IMR-90 (cell line): ENCODE measurements at regions of chr3 and their contacts with region 1.

Region 1: GRCh38 chr3:189340672-189341460 is 169.1 kb downstream of the TPRG1 start:
- DNase-seq: no peak
- ATAC-seq: no peak
- H3K4me3 ChIP-seq: no peak overlapping the region
- H3K27ac ChIP-seq: no peak overlapping the region
- H3K4me1 ChIP-seq: no peaks in the 10 kb centered on the region
- H3K27me3 ChIP-seq: 0 out of 2 replicates have a peak, but pooled peaks cover 3% of the 10 kb centered on the region
- CTCF ChIP-seq: 0 out of 2 replicates have a peak, but pooled peaks have one; percentile 5
- POLR2A ChIP-seq: no peak
- RAD21 ChIP-seq: no peak

Region 2: GRCh38 chr3:189288348-189289235 is 52.3 kb before region 1 on chr3:
- CTCF ChIA-PET with region 1: no interaction called
- POLR2A ChIA-PET with region 1: no interaction called
- dilution Hi-C with region 1: no loop called
- in situ Hi-C with region 1: no loop called
- intact Hi-C with region 1: loop called (anchors 5 kb)
- DNase-seq: no peak
- ATAC-seq: no peak
- H3K4me3 ChIP-seq: no peak overlapping the region
- H3K27ac ChIP-seq: no peak overlapping the region
- H3K4me1 ChIP-seq: no peaks in the 10 kb centered on the region
- H3K27me3 ChIP-seq: peaks cover 3% of the 10 kb centered on the region
- CTCF ChIP-seq: no peak
- POLR2A ChIP-seq: no peak
- RAD21 ChIP-seq: no peak

Region 3: GRCh38 chr3:189316242-189317019 is 24.4 kb before region 1 on chr3:
- CTCF ChIA-PET with region 1: no interaction called
- POLR2A ChIA-PET with region 1: no interaction called
- dilution Hi-C with region 1: no loop called
- in situ Hi-C with region 1: no loop called
- intact Hi-C with region 1: no loop called
- DNase-seq: no peak
- ATAC-seq: no peak
- H3K4me3 ChIP-seq: no peak overlapping the region
- H3K27ac ChIP-seq: no peak overlapping the region
- H3K4me1 ChIP-seq: no peaks in the 10 kb centered on the region
- H3K27me3 ChIP-seq: peaks cover 2% of the 10 kb centered on the region; the same call in 1 of the 2 replicates
- CTCF ChIP-seq: no peak
- POLR2A ChIP-seq: no peak
- RAD21 ChIP-seq: no peak